CD4-positive, alpha-beta T cell (primary cell): ENCODE measurements at regions of chr11 and their contacts with region 1.

Region 1: GRCh38 chr11:118689851-118690552 is 10.6 kb upstream of the TREH start:
- DNase-seq: peak; percentile 72 to 92 (median 82)
- ATAC-seq: peak; percentile 88
- H3K4me3 ChIP-seq: peak overlapping the region; percentile 46
- H3K4me3 Mint-ChIP-seq: peak overlapping the region; percentile 77
- H3K27ac ChIP-seq: no peak overlapping the region
- H3K27ac Mint-ChIP-seq: peak overlapping the region; percentile 69
- H3K4me1 ChIP-seq: peaks cover 65% of the 10 kb centered on the region
- H3K4me1 Mint-ChIP-seq: peaks cover 61% of the 10 kb centered on the region
- H3K27me3 ChIP-seq: no peaks in the 10 kb centered on the region
- H3K27me3 Mint-ChIP-seq: no peaks in the 10 kb centered on the region
- CTCF ChIP-seq: peak; percentile 100

Region 2: GRCh38 chr11:118565051-118565450 is 125.0 kb before region 1 on chr11:
- CTCF ChIA-PET with region 1: no interaction called
- POLR2A ChIA-PET with region 1: no interaction called
- intact Hi-C with region 1: no loop called
- DNase-seq: peak in 1 of 14 experiments; percentile 13
- ATAC-seq: no peak
- H3K4me3 ChIP-seq: no peak overlapping the region
- H3K4me3 Mint-ChIP-seq: peak overlapping the region; percentile 65
- H3K27ac ChIP-seq: no peak overlapping the region
- H3K27ac Mint-ChIP-seq: peak overlapping the region; percentile 95
- H3K4me1 ChIP-seq: peaks cover 12% of the 10 kb centered on the region
- H3K4me1 Mint-ChIP-seq: peaks cover 22% of the 10 kb centered on the region
- H3K27me3 ChIP-seq: no peaks in the 10 kb centered on the region
- H3K27me3 Mint-ChIP-seq: no peaks in the 10 kb centered on the region
- CTCF ChIP-seq: no peak

Region 3: DNA sequence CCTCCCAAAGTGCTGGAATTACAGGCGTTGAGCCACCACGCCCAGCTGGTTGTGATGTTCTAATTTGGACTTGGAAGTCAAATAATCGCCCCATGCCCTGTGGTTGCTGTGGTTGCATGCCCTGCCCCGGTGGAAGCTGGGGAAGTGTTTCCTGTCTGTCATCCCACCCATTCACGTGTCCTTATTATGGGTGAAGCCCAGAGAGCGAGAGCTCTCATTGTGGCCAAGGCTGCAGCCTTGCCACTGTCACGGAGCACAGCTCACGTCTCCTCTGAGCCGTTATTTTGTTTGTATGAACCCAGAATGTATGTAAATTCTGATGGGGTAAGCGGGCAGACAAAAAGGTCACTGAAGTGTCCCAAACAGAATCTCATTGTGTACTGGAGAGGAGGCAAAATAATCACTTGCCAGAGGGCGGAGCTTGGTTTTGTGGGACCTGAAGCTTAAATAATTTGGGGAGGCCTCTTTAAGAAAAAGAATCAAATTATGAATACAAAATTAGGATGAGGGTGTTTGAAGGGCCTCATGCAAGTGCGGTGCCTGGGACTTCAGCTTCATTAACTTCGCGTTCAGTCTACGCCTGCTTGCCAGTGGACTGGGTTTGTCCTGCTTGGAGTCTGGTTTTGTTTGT is 15.2 kb after region 1 on chr11:
- CTCF ChIA-PET with region 1: interaction called, 21 read pairs
- POLR2A ChIA-PET with region 1: interaction called, 55 read pairs
- intact Hi-C with region 1: no loop called
- DNase-seq: peak in 13 of 14 experiments; percentile 26 to 87 (median 45)
- ATAC-seq: peak; percentile 74
- H3K4me3 ChIP-seq: no peak overlapping the region
- H3K4me3 Mint-ChIP-seq: peak overlapping the region; percentile 84
- H3K27ac ChIP-seq: peak overlapping the region; percentile 14 to 60
- H3K27ac Mint-ChIP-seq: peak overlapping the region; percentile 92
- H3K4me1 ChIP-seq: peaks cover 42% of the 10 kb centered on the region
- H3K4me1 Mint-ChIP-seq: peaks cover 42% of the 10 kb centered on the region
- H3K27me3 ChIP-seq: no peaks in the 10 kb centered on the region
- H3K27me3 Mint-ChIP-seq: no peaks in the 10 kb centered on the region
- CTCF ChIP-seq: no peak

Region 4: DNA sequence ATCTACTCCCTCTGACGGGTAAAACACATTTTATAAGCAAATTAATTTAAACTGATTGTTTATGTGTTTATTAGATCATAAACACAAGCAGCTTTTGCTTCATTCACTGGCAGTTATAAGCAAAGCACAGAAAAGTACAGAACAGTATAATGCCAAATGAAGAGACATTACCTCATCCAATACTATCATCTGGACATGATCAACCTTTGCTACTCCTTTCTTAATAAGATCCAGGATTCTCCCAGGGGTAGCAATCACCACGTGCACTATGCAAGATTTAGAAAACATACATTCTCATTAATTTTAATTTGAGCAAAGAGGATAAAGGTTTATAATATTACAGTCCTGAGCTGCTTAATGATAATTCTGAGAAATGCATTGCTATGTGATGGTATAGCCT is 73.0 kb after region 1 on chr11:
- CTCF ChIA-PET with region 1: interaction called, 10 read pairs
- POLR2A ChIA-PET with region 1: interaction called, 4 read pairs
- intact Hi-C with region 1: no loop called
- DNase-seq: no peak
- ATAC-seq: no peak
- H3K4me3 ChIP-seq: no peak overlapping the region
- H3K4me3 Mint-ChIP-seq: no peak overlapping the region
- H3K27ac ChIP-seq: no peak overlapping the region
- H3K27ac Mint-ChIP-seq: peak overlapping the region; percentile 59
- H3K4me1 ChIP-seq: peaks cover 5% of the 10 kb centered on the region
- H3K4me1 Mint-ChIP-seq: peaks cover 33% of the 10 kb centered on the region
- H3K27me3 ChIP-seq: no peaks in the 10 kb centered on the region
- H3K27me3 Mint-ChIP-seq: no peaks in the 10 kb centered on the region
- CTCF ChIP-seq: no peak

Region 5: DNA sequence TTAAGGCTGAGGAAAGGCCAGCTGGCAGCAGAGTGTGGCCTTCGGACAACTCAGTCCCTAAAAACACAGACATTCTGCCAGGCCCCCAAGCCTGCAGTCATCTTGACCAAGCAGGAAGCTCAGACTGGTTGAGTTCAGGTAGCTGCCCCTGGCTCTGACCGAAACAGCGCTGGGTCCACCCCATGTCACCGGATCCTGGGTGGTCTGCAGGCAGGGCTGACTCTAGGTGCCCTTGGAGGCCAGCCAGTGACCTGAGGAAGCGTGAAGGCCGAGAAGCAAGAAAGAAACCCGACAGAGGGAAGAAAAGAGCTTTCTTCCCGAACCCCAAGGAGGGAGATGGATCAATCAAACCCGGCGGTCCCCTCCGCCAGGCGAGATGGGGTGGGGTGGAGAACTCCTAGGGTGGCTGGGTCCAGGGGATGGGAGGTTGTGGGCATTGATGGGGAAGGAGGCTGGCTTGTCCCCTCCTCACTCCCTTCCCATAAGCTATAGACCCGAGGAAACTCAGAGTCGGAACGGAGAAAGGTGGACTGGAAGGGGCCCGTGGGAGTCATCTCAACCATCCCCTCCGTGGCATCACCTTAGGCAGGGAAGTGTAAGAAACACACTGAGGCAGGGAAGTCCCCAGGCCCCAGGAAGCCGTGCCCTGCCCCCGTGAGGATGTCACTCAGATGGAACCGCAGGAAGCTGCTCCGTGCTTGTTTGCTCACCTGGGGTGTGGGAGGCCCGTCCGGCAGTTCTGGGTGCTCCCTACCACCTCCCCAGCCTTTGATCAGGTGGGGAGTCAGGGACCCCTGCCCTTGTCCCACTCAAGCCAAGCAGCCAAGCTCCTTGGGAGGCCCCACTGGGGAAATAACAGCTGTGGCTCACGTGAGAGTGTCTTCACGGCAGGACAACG is 205.4 kb after region 1 on chr11:
- CTCF ChIA-PET with region 1: interaction called, 6 read pairs
- POLR2A ChIA-PET with region 1: interaction called, 5 read pairs
- intact Hi-C with region 1: loop called in 1 of 2 experiments (anchors 5 kb)
- DNase-seq: peak; percentile 59 to 91 (median 76)
- ATAC-seq: peak; percentile 75
- H3K4me3 ChIP-seq: peak overlapping the region; percentile 18
- H3K4me3 Mint-ChIP-seq: peak overlapping the region; percentile 70
- H3K27ac ChIP-seq: peak overlapping the region; percentile 77 to 89
- H3K27ac Mint-ChIP-seq: peak overlapping the region; percentile 97
- H3K4me1 ChIP-seq: peaks cover 94% of the 10 kb centered on the region
- H3K4me1 Mint-ChIP-seq: peaks cover 76% of the 10 kb centered on the region
- H3K27me3 ChIP-seq: no peaks in the 10 kb centered on the region
- H3K27me3 Mint-ChIP-seq: no peaks in the 10 kb centered on the region
- CTCF ChIP-seq: no peak